Gastrocnemius medialis (tissue), 4 donors: ENCODE measurements at regions of chr11 and their contacts with region 1.

Region 1: DNA sequence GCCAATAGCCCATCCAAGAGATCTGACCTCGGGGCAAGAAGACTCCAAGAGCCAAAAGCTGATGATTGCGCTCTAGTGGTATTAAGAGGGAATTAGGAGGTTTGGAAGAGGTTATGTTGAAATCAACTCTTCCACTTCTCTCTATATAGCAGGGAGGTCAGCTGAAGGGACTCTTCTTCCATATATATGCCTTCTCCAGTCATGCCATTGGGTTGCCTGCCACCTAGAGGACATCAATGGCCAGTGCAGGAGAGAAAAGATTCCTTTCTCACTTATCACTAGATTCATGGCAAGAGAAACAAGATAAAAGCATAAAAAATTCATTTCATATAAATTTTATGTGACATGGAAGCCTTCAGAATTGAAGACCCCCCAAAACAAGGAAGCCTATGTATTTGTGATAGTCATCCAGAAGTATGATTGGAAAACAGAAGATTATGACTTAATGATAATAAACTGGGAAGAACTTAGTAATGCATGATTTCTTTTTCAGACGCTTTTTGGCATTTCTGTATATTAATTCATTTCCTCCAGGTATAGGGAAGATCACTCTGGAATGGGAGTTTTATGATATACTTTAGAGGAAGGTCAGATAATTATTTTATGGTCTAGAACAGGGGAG is 435.1 kb upstream of the DDI1 start:
- DNase-seq: peak in 1 of 2 donors; percentile 15
- ATAC-seq: peak; percentile 74 to 75
- H3K4me3 ChIP-seq: no peak overlapping the region
- H3K27ac ChIP-seq: no peak overlapping the region
- H3K4me1 ChIP-seq: no peaks in the 10 kb centered on the region
- H3K27me3 ChIP-seq: no peaks in the 10 kb centered on the region
- CTCF ChIP-seq: peak; percentile 64 to 80 (median 75)
- POLR2A ChIP-seq: no peak

Region 2: GRCh38 chr11:103202048-103202651 is 399.2 kb before region 1 on chr11:
- in situ Hi-C with region 1: no loop called
- intact Hi-C with region 1: loop called (anchors 5 kb)
- DNase-seq: no peak
- ATAC-seq: no peak
- H3K4me3 ChIP-seq: no peak overlapping the region
- H3K27ac ChIP-seq: no peak overlapping the region
- H3K4me1 ChIP-seq: no peaks in the 10 kb centered on the region
- H3K27me3 ChIP-seq: no peaks in the 10 kb centered on the region
- CTCF ChIP-seq: peak in 2 of 5 experiments; percentile 7 to 23
- POLR2A ChIP-seq: no peak

Region 3: DNA sequence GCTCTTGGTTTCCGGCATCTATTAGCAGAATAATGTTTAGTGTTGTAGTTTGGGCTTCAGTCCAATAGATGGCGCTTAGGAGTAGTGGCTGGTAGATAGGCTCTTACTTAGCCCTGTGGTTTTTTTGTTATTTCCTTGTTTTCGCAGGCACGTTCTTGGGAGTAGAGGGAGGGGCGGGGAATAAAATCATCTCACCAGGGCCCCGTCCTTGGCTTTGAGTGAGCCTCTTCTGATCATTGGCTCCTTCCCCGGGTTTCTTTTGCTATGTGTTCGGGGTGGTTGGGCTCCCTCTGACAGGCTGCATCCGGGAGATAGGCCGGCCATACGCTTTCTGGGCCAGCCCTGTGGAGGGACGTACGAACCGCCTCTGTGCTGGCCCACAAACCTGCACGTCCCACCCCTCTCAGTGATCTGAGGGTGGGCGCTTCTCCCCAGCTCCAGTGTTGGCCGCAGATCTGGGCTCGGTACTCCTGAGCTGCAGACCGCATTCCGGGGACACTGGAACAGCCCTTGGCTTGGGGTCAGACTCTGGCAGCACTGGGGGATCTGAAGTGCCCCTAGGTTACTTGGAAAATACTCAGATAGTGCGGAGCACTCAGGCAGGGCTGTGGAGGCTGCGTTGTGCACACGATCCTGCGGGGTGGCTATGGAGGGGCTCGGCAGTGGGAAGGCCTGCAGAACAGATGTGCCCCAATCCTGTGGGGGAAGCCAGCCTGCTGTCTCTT is 275.1 kb before region 1 on chr11:
- in situ Hi-C with region 1: loop called in 2 of 4 experiments (anchors 10 to 25 kb)
- intact Hi-C with region 1: loop called (anchors 1 kb)
- DNase-seq: no peak
- ATAC-seq: peak in 1 of 2 donors; percentile 36
- H3K4me3 ChIP-seq: no peak overlapping the region
- H3K27ac ChIP-seq: no peak overlapping the region
- H3K4me1 ChIP-seq: no peaks in the 10 kb centered on the region
- H3K27me3 ChIP-seq: no peaks in the 10 kb centered on the region
- CTCF ChIP-seq: peak in 1 of 5 experiments; percentile 25
- POLR2A ChIP-seq: no peak

Region 4: GRCh38 chr11:103358251-103358650 is 243.1 kb before region 1 on chr11:
- in situ Hi-C with region 1: no loop called
- intact Hi-C with region 1: no loop called
- DNase-seq: no peak
- ATAC-seq: no peak
- H3K4me3 ChIP-seq: no peak overlapping the region
- H3K27ac ChIP-seq: no peak overlapping the region
- H3K4me1 ChIP-seq: no peaks in the 10 kb centered on the region
- H3K27me3 ChIP-seq: no peaks in the 10 kb centered on the region
- CTCF ChIP-seq: no peak
- POLR2A ChIP-seq: no peak

Region 5: GRCh38 chr11:103370076-103370475 is 231.3 kb before region 1 on chr11:
- in situ Hi-C with region 1: no loop called
- intact Hi-C with region 1: no loop called
- DNase-seq: no peak
- ATAC-seq: no peak
- H3K4me3 ChIP-seq: no peak overlapping the region
- H3K27ac ChIP-seq: no peak overlapping the region
- H3K4me1 ChIP-seq: no peaks in the 10 kb centered on the region
- H3K27me3 ChIP-seq: no peaks in the 10 kb centered on the region
- CTCF ChIP-seq: no peak
- POLR2A ChIP-seq: no peak

Region 6: GRCh38 chr11:103464420-103464819 is 136.9 kb before region 1 on chr11:
- in situ Hi-C with region 1: no loop called
- intact Hi-C with region 1: loop called (anchors 5 kb)
- DNase-seq: no peak
- ATAC-seq: no peak
- H3K4me3 ChIP-seq: no peak overlapping the region
- H3K27ac ChIP-seq: no peak overlapping the region
- H3K4me1 ChIP-seq: no peaks in the 10 kb centered on the region
- H3K27me3 ChIP-seq: no peaks in the 10 kb centered on the region
- CTCF ChIP-seq: no peak
- POLR2A ChIP-seq: no peak

Region 7: DNA sequence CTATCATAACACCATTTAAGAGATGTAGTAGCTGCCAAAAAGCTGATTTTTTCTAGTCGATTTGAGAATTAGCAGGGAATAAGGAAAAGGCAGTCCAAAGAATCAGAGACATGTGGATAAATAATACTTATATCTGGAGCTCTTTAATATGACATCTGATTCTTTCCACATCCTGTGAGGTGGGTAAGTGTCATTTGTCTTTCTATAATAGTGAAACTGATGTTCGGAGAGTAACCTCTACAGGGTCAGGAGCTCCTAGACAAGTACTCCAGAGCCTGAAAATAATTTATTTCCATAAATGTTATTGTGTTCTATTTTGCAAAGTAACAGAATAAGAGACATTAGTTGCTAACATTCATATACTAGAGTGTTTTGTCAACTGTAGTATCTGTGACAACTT is 124.5 kb before region 1 on chr11:
- in situ Hi-C with region 1: no loop called
- intact Hi-C with region 1: loop called (anchors 5 kb)
- DNase-seq: no peak
- ATAC-seq: no peak
- H3K4me3 ChIP-seq: no peak overlapping the region
- H3K27ac ChIP-seq: no peak overlapping the region
- H3K4me1 ChIP-seq: no peaks in the 10 kb centered on the region
- H3K27me3 ChIP-seq: no peaks in the 10 kb centered on the region
- CTCF ChIP-seq: no peak
- POLR2A ChIP-seq: no peak